IMR-90 (cell line): ENCODE measurements at regions of chr1 and their contacts with region 1.

Region 1: GRCh38 chr1:111148376-111148881 is 8.4 kb downstream of the CEPT1 start:
- DNase-seq: no peak
- ATAC-seq: no peak
- H3K4me3 ChIP-seq: no peak overlapping the region
- H3K27ac ChIP-seq: no peak overlapping the region
- H3K4me1 ChIP-seq: no peaks in the 10 kb centered on the region
- H3K27me3 ChIP-seq: no peaks in the 10 kb centered on the region
- CTCF ChIP-seq: no peak
- POLR2A ChIP-seq: no peak
- RAD21 ChIP-seq: no peak

Region 2: GRCh38 chr1:111183308-111184069 is 35.1 kb after region 1 on chr1:
- CTCF ChIA-PET with region 1: no interaction called
- POLR2A ChIA-PET with region 1: no interaction called
- dilution Hi-C with region 1: no loop called
- in situ Hi-C with region 1: no loop called
- intact Hi-C with region 1: loop called (anchors 5 kb)
- DNase-seq: no peak
- ATAC-seq: no peak
- H3K4me3 ChIP-seq: no peak overlapping the region
- H3K27ac ChIP-seq: no peak overlapping the region
- H3K4me1 ChIP-seq: no peaks in the 10 kb centered on the region
- H3K27me3 ChIP-seq: no peaks in the 10 kb centered on the region
- CTCF ChIP-seq: no peak
- POLR2A ChIP-seq: no peak
- RAD21 ChIP-seq: no peak